ENCODE measurements at regions of chr2 and their contacts with region 1.

Region 1: DNA sequence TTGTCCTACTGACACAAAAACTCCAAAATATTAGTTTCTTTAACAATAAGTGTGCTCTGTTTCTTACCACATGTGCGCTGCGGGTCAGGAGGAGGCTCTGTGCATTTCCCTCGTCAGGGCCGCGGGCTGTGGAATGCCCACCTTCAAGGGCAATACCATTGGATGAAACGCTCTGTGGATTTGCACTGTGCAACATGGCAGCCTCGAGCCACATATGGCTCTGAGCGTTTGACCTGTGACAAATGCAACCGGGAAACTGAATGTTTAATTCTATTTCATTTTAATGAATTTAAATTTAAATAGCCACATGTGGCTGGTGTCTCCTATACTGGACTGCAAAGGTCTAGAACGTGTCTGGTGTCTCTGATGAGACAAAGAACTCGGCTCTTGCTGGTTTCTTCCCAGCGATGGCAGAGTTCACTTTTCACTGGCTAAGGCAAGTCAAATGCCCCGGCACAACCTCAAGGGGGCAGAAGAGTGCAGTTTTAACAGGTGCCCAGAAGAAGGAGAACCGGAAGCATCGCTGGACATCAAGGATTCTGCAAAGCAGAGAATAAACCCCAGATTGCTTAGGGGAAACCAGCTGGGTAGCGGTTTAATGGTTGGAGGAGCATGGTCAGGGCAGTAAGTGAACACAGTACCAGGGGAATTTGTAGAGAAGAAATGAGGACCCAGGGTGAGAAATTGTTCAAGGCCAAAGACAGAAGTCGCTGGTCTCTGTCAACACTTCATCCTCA is 37.0 kb upstream of the TMEM18 start:
- DNase-seq: no peak
- ATAC-seq: peak; percentile 82
- H3K4me3 Mint-ChIP-seq: peak overlapping the region; percentile 20
- H3K27ac Mint-ChIP-seq: no peak overlapping the region
- H3K4me1 Mint-ChIP-seq: peaks cover 18% of the 10 kb centered on the region
- H3K27me3 Mint-ChIP-seq: peaks cover 28% of the 10 kb centered on the region
- CTCF ChIP-seq: no peak

Region 2: DNA sequence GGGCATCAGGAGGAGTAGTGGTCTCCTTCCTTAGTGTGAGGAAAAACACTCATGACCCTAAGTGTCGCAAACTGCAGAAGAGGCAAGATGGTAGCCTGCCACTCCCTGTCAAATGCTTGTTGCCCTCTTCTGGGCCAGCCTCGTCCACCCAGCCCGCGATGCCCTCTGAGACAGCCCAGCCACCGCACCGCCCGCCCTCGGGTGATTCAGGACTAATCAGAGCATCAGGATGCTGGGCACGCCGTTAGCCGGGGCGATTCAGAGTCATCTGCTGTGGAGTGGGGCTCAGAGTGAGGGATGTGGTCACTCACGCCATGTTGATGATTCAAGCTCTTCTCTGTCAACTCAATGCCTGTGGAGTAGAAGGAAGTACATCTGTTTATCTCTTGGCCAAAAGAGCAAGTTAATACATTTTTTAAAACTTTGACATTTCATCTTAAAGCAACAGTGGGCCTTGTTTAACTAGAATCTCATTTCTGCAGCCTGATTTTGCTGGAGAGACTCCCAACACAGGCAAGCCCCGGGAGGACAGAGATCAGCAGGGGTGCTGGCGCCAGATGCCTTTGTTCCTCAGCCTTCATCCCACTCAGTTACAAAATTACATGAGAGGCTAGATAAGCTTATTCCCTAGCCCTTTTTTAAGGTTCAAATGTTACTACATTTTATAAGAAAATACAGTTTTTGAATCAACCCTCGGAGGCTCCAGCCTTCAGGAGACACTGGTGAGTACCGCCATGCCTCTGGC is 115.9 kb before region 1 on chr2:
- CTCF ChIA-PET with region 1: no interaction called
- POLR2A ChIA-PET with region 1: no interaction called
- intact Hi-C with region 1: no loop called
- DNase-seq: no peak
- ATAC-seq: no peak
- H3K4me3 Mint-ChIP-seq: no peak overlapping the region
- H3K27ac Mint-ChIP-seq: no peak overlapping the region
- H3K4me1 Mint-ChIP-seq: no peaks in the 10 kb centered on the region
- H3K27me3 Mint-ChIP-seq: no peaks in the 10 kb centered on the region
- CTCF ChIP-seq: no peak

Region 3: DNA sequence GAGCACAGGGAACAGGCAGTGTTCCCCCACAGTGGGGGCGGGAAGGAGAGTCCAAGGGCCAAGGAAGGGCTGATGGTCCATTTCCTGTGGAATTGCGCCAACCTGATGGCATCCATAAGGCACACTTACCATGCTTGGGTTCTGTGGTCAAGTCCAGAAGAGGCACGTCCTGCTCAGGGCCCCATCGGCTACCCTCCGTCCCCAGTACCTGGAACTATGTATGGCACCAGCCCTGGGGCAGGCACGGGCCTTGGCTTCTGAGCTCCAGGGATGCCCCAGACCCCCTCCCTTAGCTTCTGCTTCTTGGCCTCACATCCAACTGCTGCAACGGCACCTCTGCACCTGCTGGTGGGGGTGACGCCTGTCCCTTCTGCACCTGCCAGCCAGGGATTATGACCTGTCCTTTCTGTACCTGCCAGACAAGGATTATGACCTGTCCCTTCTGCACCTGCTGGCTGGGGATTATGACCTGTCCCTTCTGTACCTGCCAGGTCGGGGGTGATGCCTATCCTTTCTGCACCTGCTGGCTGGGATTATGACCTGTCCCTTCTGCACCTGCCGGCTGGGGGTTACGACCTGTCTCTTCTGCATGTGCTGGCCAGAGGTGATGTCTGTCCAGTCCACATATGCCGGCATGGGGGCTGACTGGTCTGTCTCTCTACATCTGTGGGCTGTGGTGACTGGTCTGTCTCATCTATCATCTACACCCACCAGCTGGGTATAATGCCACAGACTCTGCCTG is 191.1 kb after region 1 on chr2:
- CTCF ChIA-PET with region 1: no interaction called
- POLR2A ChIA-PET with region 1: no interaction called
- intact Hi-C with region 1: no loop called
- DNase-seq: no peak
- ATAC-seq: no peak
- H3K4me3 Mint-ChIP-seq: no peak overlapping the region
- H3K27ac Mint-ChIP-seq: no peak overlapping the region
- H3K4me1 Mint-ChIP-seq: no peaks in the 10 kb centered on the region
- H3K27me3 Mint-ChIP-seq: peaks cover 4% of the 10 kb centered on the region
- CTCF ChIP-seq: no peak

Region 4: GRCh38 chr2:1750933-1751766 is 1037.0 kb after region 1 on chr2:
- CTCF ChIA-PET with region 1: no interaction called
- POLR2A ChIA-PET with region 1: no interaction called
- intact Hi-C with region 1: loop called (anchors 5 kb)
- DNase-seq: no peak
- ATAC-seq: peak; percentile 60
- H3K4me3 Mint-ChIP-seq: no peak overlapping the region
- H3K27ac Mint-ChIP-seq: no peak overlapping the region
- H3K4me1 Mint-ChIP-seq: peaks cover 4% of the 10 kb centered on the region
- H3K27me3 Mint-ChIP-seq: peaks cover 32% of the 10 kb centered on the region
- CTCF ChIP-seq: no peak